Sciatic nerve (tissue), 2 donors: ENCODE measurements at regions of chr13 and their contacts with region 1.

Region 1: DNA sequence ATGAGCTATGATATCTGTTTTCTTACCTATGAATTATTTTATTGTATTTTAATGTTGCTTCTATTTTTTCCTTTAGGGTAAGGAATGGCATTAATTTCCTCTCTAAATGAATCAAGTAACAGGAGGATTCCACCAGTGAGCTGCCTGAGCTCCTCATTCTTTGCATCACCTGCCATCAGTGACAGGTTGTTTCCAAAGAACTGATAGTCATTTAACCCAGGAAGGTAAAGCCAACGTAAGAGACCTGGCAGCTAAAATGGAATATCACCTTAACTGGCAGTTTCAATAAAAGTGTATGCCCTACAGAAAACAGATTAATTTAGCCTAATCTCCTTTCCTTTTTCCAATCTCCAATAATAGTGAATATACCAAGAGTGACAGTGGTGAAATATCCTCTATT is 812.0 kb downstream of the SLITRK5 start:
- DNase-seq: no peak
- ATAC-seq: no peak

Region 2: GRCh38 chr13:87656306-87656705 is 826.9 kb before region 1 on chr13:
- intact Hi-C with region 1: no loop called
- DNase-seq: no peak
- ATAC-seq: no peak

Region 3: GRCh38 chr13:88565566-88565965 is 82.4 kb after region 1 on chr13:
- intact Hi-C with region 1: no loop called
- DNase-seq: no peak
- ATAC-seq: no peak

Region 4: GRCh38 chr13:90362707-90363106 is 1879.5 kb after region 1 on chr13:
- intact Hi-C with region 1: loop called (anchors 5 kb)
- DNase-seq: no peak
- ATAC-seq: no peak